MCF 10A (cell line): ENCODE measurements at regions of chr5 and their contacts with region 1.

Region 1: GRCh38 chr5:151298063-151298855 is 5.3 kb downstream of the SLC36A3 start:
- DNase-seq: peak; percentile 90
- H3K4me3 Mint-ChIP-seq: no peak overlapping the region
- H3K27ac Mint-ChIP-seq: no peak overlapping the region
- H3K4me1 Mint-ChIP-seq: peaks cover 23% of the 10 kb centered on the region
- H3K27me3 Mint-ChIP-seq: peaks cover 36% of the 10 kb centered on the region
- CTCF ChIP-seq: peak; percentile 68

Region 2: DNA sequence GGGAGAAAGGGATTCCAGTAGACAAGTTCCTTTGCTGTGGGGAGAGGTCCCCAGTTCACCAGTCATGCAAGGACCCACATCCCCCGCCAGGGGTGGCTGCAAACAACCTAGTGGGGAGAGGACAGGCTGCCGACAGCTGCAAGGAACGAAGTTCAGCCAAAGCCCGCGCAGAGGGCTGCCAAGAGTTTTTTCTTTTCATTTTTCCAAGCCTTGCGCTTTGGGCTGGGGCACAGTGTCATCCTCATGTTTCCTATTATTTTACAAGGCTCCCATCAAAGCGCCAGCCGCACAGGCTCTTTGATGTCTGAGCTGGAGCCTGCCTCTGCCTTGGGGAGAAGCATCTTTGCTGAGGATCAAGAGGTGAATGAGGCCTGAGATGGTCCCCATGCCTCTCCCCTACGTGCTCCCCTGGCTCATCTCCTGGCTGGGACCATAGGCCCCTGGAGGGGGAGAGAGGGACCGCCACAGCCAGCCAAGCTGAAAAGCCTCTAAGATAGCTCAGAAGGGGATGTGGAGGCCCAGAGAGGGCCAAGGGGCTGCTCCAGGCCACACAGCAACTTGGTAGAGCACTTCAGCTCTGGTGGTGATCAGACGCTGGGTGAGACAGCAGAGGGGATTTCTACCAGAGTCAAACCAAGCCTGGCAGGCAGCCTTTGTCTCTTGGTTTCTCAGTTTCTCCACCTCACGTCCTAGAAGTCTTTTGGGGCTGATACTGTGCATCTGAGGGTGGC is 708.2 kb before region 1 on chr5:
- CTCF ChIA-PET with region 1: no interaction called
- POLR2A ChIA-PET with region 1: no interaction called
- intact Hi-C with region 1: no loop called
- DNase-seq: no peak
- H3K4me3 Mint-ChIP-seq: no peak overlapping the region
- H3K27ac Mint-ChIP-seq: no peak overlapping the region
- H3K4me1 Mint-ChIP-seq: peaks cover 7% of the 10 kb centered on the region
- H3K27me3 Mint-ChIP-seq: no peaks in the 10 kb centered on the region
- CTCF ChIP-seq: no peak

Region 3: GRCh38 chr5:151288180-151288579 is 10.1 kb before region 1 on chr5:
- CTCF ChIA-PET with region 1: interaction called, 10 read pairs
- POLR2A ChIA-PET with region 1: no interaction called
- intact Hi-C with region 1: no loop called
- DNase-seq: peak; percentile 69
- H3K4me3 Mint-ChIP-seq: no peak overlapping the region
- H3K27ac Mint-ChIP-seq: no peak overlapping the region
- H3K4me1 Mint-ChIP-seq: peaks cover 6% of the 10 kb centered on the region
- H3K27me3 Mint-ChIP-seq: no peaks in the 10 kb centered on the region
- CTCF ChIP-seq: peak; percentile 5

Region 4: DNA sequence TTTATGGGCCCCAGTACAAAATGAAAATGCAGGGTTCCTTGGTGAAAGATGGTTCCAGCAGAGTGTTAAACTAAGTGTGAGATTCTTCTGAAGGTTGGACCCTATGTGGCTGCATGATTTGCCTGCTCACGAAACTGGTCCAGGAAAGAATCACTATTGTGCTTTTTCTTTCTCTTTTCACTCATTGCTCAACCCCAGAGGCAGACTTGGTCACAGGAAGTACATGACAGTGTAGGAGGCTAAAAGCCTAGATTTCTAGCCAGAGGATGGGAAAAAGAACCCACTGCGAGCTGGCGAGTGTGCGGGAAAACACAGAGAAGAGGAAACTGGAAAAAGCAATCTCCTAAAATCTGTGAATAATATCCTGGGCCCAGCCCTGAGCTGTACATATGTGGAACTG is 30.5 kb after region 1 on chr5:
- CTCF ChIA-PET with region 1: no interaction called
- POLR2A ChIA-PET with region 1: no interaction called
- intact Hi-C with region 1: no loop called
- DNase-seq: no peak
- H3K4me3 Mint-ChIP-seq: no peak overlapping the region
- H3K27ac Mint-ChIP-seq: no peak overlapping the region
- H3K4me1 Mint-ChIP-seq: no peaks in the 10 kb centered on the region
- H3K27me3 Mint-ChIP-seq: peaks cover 10% of the 10 kb centered on the region
- CTCF ChIP-seq: no peak